HepG2 (cell line): ENCODE measurements at regions of chr2 and their contacts with region 1.

Region 1: GRCh38 chr2:239700686-239701345 is 300.0 kb upstream of the HDAC4 start:
- DNase-seq: no peak
- ATAC-seq: no peak
- H3K4me3 ChIP-seq: no peak overlapping the region
- H3K27ac ChIP-seq: no peak overlapping the region
- H3K4me1 ChIP-seq: no peaks in the 10 kb centered on the region
- H3K27me3 ChIP-seq: peaks cover 2 to 18% of the 10 kb centered on the region in 2 experiments; a peak in 3 of 5 replicates
- CTCF ChIP-seq: no peak
- EP300 ChIP-seq: no peak
- POLR2A ChIP-seq: no peak
- RAD21 ChIP-seq: no peak

Region 2: DNA sequence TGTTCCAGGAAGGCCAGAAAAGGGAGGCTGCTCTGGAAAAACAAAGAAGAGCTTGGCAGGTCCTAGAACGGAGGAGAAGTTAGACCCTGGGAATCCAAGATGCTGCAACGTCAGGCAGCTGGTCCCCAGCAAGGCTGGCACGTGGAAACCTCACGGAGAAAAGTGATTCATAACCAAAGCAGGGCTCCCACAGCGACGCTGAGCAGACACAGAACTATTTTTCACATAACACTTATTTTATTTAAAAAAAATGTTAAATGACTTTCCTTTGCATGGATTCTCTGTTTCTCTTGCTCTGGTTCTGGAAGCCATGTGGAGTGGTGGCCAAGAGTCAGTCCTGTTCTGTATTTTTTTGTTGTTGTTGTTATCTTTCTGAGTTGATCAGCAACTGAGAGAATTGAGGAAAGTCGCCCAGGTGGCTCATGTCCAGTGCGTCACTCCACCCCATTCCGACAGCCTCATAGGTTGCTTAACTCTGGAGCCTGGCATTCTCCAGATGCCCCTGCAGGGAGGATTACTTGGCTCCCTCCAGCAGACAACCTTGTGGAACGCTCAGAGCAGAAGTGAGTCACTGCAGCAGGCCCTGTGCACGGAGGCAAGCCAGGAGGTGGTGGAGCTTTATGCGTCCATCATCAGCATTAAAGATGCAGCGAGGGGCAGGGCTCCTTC is 70.1 kb before region 1 on chr2:
- CTCF ChIA-PET with region 1: no interaction called
- POLR2A ChIA-PET with region 1: no interaction called
- in situ Hi-C with region 1: no loop called
- intact Hi-C with region 1: no loop called
- DNase-seq: no peak
- ATAC-seq: no peak
- H3K4me3 ChIP-seq: no peak overlapping the region
- H3K27ac ChIP-seq: no peak overlapping the region
- H3K4me1 ChIP-seq: no peaks in the 10 kb centered on the region
- H3K27me3 ChIP-seq: peaks cover 1 to 15% of the 10 kb centered on the region in 2 experiments; a peak in 3 of 5 replicates
- CTCF ChIP-seq: no peak
- EP300 ChIP-seq: no peak
- POLR2A ChIP-seq: no peak
- RAD21 ChIP-seq: no peak

Region 3: DNA sequence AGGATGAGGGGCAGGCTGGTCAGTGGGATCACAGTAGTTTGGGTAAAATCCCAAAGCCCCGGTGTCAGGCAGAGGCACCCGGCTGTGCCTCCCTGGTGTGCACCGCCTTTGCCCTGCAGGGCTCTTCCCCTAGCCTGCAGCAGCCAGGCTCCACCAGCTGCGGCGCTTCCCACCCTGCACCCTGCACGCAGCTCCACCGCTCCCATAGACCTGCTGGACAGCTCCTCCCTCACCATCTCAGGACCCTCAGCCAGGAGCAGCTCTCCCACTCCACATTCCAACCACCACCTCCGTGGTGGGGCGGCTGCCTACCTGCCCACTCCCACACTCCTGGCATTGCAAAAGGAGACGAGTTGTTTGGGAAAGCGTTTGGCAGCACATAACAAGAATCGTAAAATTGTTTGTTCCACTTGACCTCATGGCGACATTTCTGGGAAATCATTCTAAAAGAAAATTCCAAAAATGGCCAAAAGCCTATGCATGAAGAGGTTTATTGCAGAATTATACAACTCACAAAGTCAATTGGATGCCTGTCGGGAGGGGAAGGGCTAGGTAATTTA is 12.6 kb before region 1 on chr2:
- CTCF ChIA-PET with region 1: no interaction called
- POLR2A ChIA-PET with region 1: no interaction called
- in situ Hi-C with region 1: no loop called
- intact Hi-C with region 1: loop called (anchors 1 kb)
- DNase-seq: no peak
- ATAC-seq: peak; percentile 82
- H3K4me3 ChIP-seq: no peak overlapping the region
- H3K27ac ChIP-seq: no peak overlapping the region
- H3K4me1 ChIP-seq: no peaks in the 10 kb centered on the region
- H3K27me3 ChIP-seq: peaks cover 3 to 54% of the 10 kb centered on the region in 2 experiments; a peak in 4 of 5 replicates
- CTCF ChIP-seq: no peak
- EP300 ChIP-seq: no peak
- POLR2A ChIP-seq: no peak
- RAD21 ChIP-seq: no peak